ENCODE measurements at regions of chr5 and their contacts with region 1.

Region 1: DNA sequence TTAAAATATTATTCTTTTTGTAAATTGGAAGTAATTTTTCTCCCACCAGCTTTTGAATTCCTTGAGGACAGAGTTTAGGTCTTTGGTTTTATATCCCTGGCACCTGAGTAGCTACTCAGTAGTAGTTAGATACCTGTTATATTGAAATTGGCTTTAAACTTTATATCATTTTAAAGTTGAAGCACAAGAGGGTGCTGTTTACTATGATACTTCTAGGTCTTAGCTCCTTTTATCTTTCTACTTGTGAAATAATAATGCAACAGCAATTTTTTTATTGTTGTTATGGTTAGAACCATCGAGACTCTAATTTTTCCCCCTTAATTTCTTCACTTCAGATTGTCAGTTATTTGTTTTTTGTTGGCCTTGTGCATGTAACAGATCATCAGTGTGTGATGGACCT is 46.3 kb downstream of the AP3S1 start:
- DNase-seq: peak; percentile 56
- H3K4me3 ChIP-seq: no peak overlapping the region
- H3K27ac ChIP-seq: no peak overlapping the region
- H3K4me1 ChIP-seq: no peaks in the 10 kb centered on the region
- H3K27me3 ChIP-seq: no peaks in the 10 kb centered on the region
- CTCF ChIP-seq: no peak
- POLR2A ChIP-seq: no peak

Region 2: DNA sequence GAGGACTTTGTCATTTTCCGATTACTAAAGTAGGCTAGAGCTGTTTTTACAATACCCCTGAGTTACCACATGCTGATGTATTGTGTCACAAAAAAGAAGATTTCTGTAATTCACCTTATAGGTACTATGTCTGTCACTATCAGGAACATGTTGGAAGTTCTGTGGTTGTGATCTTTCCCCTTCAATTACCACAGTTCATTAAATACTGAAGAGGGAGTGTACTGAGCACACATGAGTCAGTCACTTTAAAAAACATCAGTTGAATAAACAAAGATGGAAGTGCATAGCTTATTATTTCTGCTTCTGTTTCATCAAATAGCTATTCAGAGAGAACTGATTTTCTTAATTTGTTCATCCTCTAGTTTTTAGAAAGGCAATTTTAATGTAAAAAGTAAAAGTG is 14.6 kb before region 1 on chr5:
- CTCF ChIA-PET with region 1: interaction called, 20 read pairs
- POLR2A ChIA-PET with region 1: no interaction called
- dilution Hi-C with region 1: no loop called
- intact Hi-C with region 1: no loop called
- DNase-seq: peak; percentile 44
- H3K4me3 ChIP-seq: no peak overlapping the region
- H3K27ac ChIP-seq: no peak overlapping the region
- H3K4me1 ChIP-seq: peaks cover 10% of the 10 kb centered on the region
- H3K27me3 ChIP-seq: no peaks in the 10 kb centered on the region
- CTCF ChIP-seq: no peak
- POLR2A ChIP-seq: no peak

Region 3: GRCh38 chr5:115898656-115899055 is 10.6 kb after region 1 on chr5:
- CTCF ChIA-PET with region 1: interaction called, 11 read pairs
- POLR2A ChIA-PET with region 1: no interaction called
- dilution Hi-C with region 1: no loop called
- intact Hi-C with region 1: no loop called
- DNase-seq: no peak
- H3K4me3 ChIP-seq: no peak overlapping the region
- H3K27ac ChIP-seq: no peak overlapping the region
- H3K4me1 ChIP-seq: no peaks in the 10 kb centered on the region
- H3K27me3 ChIP-seq: no peaks in the 10 kb centered on the region
- CTCF ChIP-seq: no peak
- POLR2A ChIP-seq: no peak

Region 4: DNA sequence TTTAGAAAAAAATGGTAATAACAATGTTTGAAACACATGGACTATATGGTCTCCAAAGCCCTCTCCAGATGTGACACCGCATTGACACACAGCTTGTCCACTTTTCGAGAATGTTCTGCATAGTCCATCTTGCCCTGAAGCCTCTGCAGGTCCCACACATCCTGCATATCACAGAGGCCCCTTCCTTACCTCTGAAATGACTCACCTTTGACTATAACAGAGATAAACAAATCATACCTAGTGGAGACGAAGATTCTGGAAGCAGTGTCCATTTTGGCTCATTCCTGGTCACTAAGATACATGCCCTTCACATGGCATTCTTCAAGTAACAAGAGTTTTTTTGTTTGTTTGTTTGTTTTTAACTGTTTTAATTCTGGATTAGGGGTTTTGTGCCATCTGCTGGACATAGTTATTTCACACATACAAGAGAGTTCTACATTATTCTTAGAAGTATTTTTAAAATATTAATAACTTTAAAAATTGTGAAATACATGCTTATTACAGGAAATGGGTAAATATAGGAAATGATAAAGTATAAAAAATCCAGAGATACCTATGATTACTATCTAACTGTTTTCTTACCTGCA is 149.3 kb after region 1 on chr5:
- CTCF ChIA-PET with region 1: interaction called, 34 read pairs
- POLR2A ChIA-PET with region 1: no interaction called
- dilution Hi-C with region 1: no loop called
- intact Hi-C with region 1: loop called (anchors 1 kb)
- DNase-seq: peak; percentile 38
- H3K4me3 ChIP-seq: no peak overlapping the region
- H3K27ac ChIP-seq: no peak overlapping the region
- H3K4me1 ChIP-seq: peaks cover 2% of the 10 kb centered on the region
- H3K27me3 ChIP-seq: no peaks in the 10 kb centered on the region
- CTCF ChIP-seq: no peak
- POLR2A ChIP-seq: no peak

Region 5: DNA sequence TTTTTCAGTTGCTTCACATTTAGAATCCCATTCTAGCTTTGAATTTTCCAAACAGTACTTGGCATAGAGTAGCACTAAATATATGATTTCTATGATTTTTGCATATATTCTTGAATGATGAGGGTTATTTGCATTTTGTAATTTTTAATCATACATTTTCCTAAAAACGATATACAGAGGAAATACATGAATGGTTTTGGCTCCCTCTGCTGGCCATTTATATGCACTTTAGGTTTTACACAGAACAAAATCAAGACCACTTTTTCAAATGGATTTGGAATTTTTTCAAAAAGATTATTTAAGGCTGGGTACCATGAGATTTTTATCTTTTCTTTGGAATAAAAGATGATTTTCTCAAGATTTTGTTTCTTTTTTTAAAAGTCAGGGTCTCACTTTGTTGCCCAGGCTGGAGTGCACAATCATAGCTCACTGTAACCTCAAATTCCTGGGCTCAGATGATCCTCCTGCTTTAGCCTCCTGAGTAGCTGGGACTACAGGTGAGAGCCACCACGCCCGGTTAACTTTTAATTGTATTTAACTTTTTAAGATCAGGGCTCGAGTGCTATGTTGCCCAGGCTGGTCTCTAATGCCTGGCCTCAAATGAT is 180.1 kb after region 1 on chr5:
- CTCF ChIA-PET with region 1: interaction called, 66 read pairs
- POLR2A ChIA-PET with region 1: no interaction called
- dilution Hi-C with region 1: no loop called
- intact Hi-C with region 1: loop called (anchors 1 kb)
- DNase-seq: peak; percentile 61
- H3K4me3 ChIP-seq: no peak overlapping the region
- H3K27ac ChIP-seq: no peak overlapping the region
- H3K4me1 ChIP-seq: no peaks in the 10 kb centered on the region
- H3K27me3 ChIP-seq: peaks cover 0 to 7% of the 10 kb centered on the region in 2 experiments
- CTCF ChIP-seq: peak; percentile 43 to 51
- POLR2A ChIP-seq: no peak

Measured in endothelial cell of umbilical vein (primary cell).